ENCODE measurements at regions of chr6 and their contacts with region 1.

Region 1: GRCh38 chr6:28104392-28105244 is 19.8 kb upstream of the ZSCAN16 start:
- DNase-seq: peak; percentile 68 to 82 (median 79)
- ATAC-seq: peak; percentile 99
- H3K4me3 ChIP-seq: peak overlapping the region; percentile 79
- H3K4me3 Mint-ChIP-seq: peak overlapping the region; percentile 86 to 95 (median 92)
- H3K27ac ChIP-seq: peak overlapping the region; percentile 76
- H3K27ac Mint-ChIP-seq: peak overlapping the region; percentile 76 to 96 (median 94)
- H3K4me1 ChIP-seq: peaks cover 0 to 7% of the 10 kb centered on the region in 2 donors
- H3K4me1 Mint-ChIP-seq: peaks cover 6 to 19% (median 9%) of the 10 kb centered on the region in 7 donors
- H3K27me3 ChIP-seq: no peaks in the 10 kb centered on the region
- H3K27me3 Mint-ChIP-seq: peaks cover 0 to 26% (median 16%) of the 10 kb centered on the region in 5 donors

Region 2: GRCh38 chr6:28124102-28124970 is 19.7 kb after region 1 on chr6 and contains the start of gene ZSCAN16:
- CTCF ChIA-PET with region 1: interaction called, 4 read pairs
- POLR2A ChIA-PET with region 1: interaction called, 5 read pairs
- intact Hi-C with region 1: loop called in 1 of 2 experiments (anchors 1 kb)
- DNase-seq: peak; percentile 43 to 72 (median 59)
- ATAC-seq: peak; percentile 86
- H3K4me3 ChIP-seq: peak within 1 kb of the TSS; percentile 86
- H3K4me3 Mint-ChIP-seq: peak within 1 kb of the TSS; percentile 80 to 98 (median 95)
- H3K27ac ChIP-seq: peak within 1 kb of the TSS; percentile 93
- H3K27ac Mint-ChIP-seq: peak within 1 kb of the TSS; percentile 83 to 99 (median 96)
- H3K4me1 ChIP-seq: peaks cover 12 to 16% of the 10 kb centered on the region in 2 donors
- H3K4me1 Mint-ChIP-seq: peaks cover 35 to 54% (median 48%) of the 10 kb centered on the region in 7 donors
- H3K27me3 ChIP-seq: no peaks in the 10 kb centered on the region
- H3K27me3 Mint-ChIP-seq: no peaks in the 10 kb centered on the region
- total RNA-seq, gene ZSCAN16: 6.4 to 13.9 (median 7.6) TPM

Region 3: GRCh38 chr6:28355743-28356665 is 251.4 kb after region 1 on chr6:
- CTCF ChIA-PET with region 1: interaction called, 7 read pairs
- POLR2A ChIA-PET with region 1: interaction called, 4 read pairs
- intact Hi-C with region 1: loop called in 1 of 2 experiments (anchors 1 kb)
- DNase-seq: peak; percentile 26 to 69 (median 54)
- ATAC-seq: peak; percentile 92
- H3K4me3 ChIP-seq: peak overlapping the region; percentile 69
- H3K4me3 Mint-ChIP-seq: peak overlapping the region; percentile 78 to 96 (median 92)
- H3K27ac ChIP-seq: no peak overlapping the region
- H3K27ac Mint-ChIP-seq: peak overlapping the region; percentile 21 to 89 (median 62)
- H3K4me1 ChIP-seq: peaks cover 0 to 7% of the 10 kb centered on the region in 2 donors
- H3K4me1 Mint-ChIP-seq: peaks cover 16 to 38% (median 34%) of the 10 kb centered on the region in 7 donors
- H3K27me3 ChIP-seq: no peaks in the 10 kb centered on the region
- H3K27me3 Mint-ChIP-seq: no peaks in the 10 kb centered on the region

Measured in naive thymus-derived CD4-positive, alpha-beta T cell (primary cell).